Astrocyte of the cerebellum (primary cell): ENCODE measurements at regions of chr12 and their contacts with region 1.

Region 1: GRCh38 chr12:77685112-77685511 is 145.6 kb upstream of the NAV3 start:
- DNase-seq: peak; percentile 80
- H3K4me3 ChIP-seq: no peak overlapping the region
- CTCF ChIP-seq: peak; percentile 75

Region 2: GRCh38 chr12:77065361-77066204 is 619.5 kb before region 1 on chr12 and contains the start of gene E2F7:
- in situ Hi-C with region 1: loop called (anchors 25 kb)
- DNase-seq: peak; percentile 73
- H3K4me3 ChIP-seq: peak within 1 kb of the TSS; percentile 77
- CTCF ChIP-seq: no peak

Region 3: GRCh38 chr12:77152623-77153193 is 532.4 kb before region 1 on chr12:
- in situ Hi-C with region 1: loop called (anchors 25 kb)
- DNase-seq: peak; percentile 51
- H3K4me3 ChIP-seq: no peak overlapping the region
- CTCF ChIP-seq: peak; percentile 65